PC-3 (cell line): ENCODE measurements at regions of chr5 and their contacts with region 1.

Region 1: DNA sequence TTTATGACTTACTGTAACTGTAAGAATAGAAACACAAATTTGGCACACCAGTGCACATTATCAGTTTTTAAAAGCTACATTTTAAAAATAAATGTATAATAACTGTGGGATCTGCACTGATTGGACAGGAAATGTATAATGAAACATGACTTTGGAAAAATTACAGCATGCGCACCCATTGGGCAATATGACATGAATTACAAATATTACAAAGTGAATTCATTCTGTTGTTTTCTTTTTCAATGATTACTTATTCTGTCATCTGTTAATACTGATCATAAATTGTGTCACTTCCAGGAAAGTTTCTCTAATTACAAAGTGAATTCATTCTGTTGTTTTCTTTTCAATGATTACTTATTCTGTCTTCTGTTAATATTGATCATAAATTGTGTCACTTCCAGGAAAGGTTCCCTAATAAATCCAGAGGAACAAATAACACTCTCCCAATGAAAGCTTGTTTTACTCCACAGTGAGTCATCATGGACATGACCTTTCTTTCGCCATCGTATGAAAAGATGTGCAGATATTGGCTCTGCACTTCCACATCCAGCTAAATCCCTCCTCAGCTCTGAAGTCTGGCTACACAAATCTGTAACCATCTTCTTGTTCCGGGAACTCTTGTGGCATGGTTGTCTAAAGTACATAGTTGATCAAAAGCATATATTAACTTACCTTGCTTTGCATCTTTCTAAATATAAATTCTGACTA is 297.0 kb upstream of the HAPLN1 start:
- DNase-seq: peak; percentile 76
- ATAC-seq: peak; percentile 76
- H3K4me3 ChIP-seq: no peak overlapping the region
- H3K27ac ChIP-seq: peak overlapping the region; percentile 95
- H3K4me1 ChIP-seq: peaks cover 42% of the 10 kb centered on the region
- H3K27me3 ChIP-seq: no peaks in the 10 kb centered on the region
- CTCF ChIP-seq: no peak

Region 2: GRCh38 chr5:83740741-83741140 is 276.9 kb before region 1 on chr5:
- CTCF ChIA-PET with region 1: no interaction called
- POLR2A ChIA-PET with region 1: no interaction called
- intact Hi-C with region 1: loop called (anchors 5 kb)
- DNase-seq: no peak
- ATAC-seq: no peak
- H3K4me3 ChIP-seq: no peak overlapping the region
- H3K27ac ChIP-seq: no peak overlapping the region
- H3K4me1 ChIP-seq: peaks cover 8% of the 10 kb centered on the region; the same call in 1 of the 2 replicates
- H3K27me3 ChIP-seq: no peaks in the 10 kb centered on the region
- CTCF ChIP-seq: no peak

Region 3: GRCh38 chr5:83955916-83956315 is 61.8 kb before region 1 on chr5:
- CTCF ChIA-PET with region 1: no interaction called
- POLR2A ChIA-PET with region 1: no interaction called
- intact Hi-C with region 1: loop called (anchors 2 kb)
- DNase-seq: peak; percentile 59
- ATAC-seq: peak; percentile 64
- H3K4me3 ChIP-seq: no peak overlapping the region
- H3K27ac ChIP-seq: peak overlapping the region; percentile 89
- H3K4me1 ChIP-seq: peaks cover 36% of the 10 kb centered on the region
- H3K27me3 ChIP-seq: no peaks in the 10 kb centered on the region
- CTCF ChIP-seq: no peak

Region 4: GRCh38 chr5:84088995-84089394 is 71.3 kb after region 1 on chr5:
- CTCF ChIA-PET with region 1: interaction called, 3 read pairs
- POLR2A ChIA-PET with region 1: no interaction called
- intact Hi-C with region 1: loop called (anchors 5 kb)
- DNase-seq: peak; percentile 63
- ATAC-seq: 0 out of 2 replicates have a peak, but pooled peaks have one; percentile 31
- H3K4me3 ChIP-seq: no peak overlapping the region
- H3K27ac ChIP-seq: no peak overlapping the region
- H3K4me1 ChIP-seq: peaks cover 21% of the 10 kb centered on the region
- H3K27me3 ChIP-seq: no peaks in the 10 kb centered on the region
- CTCF ChIP-seq: peak; percentile 72

Region 5: GRCh38 chr5:84249918-84250630 is 232.4 kb after region 1 on chr5:
- CTCF ChIA-PET with region 1: no interaction called
- POLR2A ChIA-PET with region 1: no interaction called
- intact Hi-C with region 1: loop called (anchors 5 kb)
- DNase-seq: peak; percentile 84
- ATAC-seq: peak; percentile 76
- H3K4me3 ChIP-seq: peak overlapping the region; percentile 47; the same call in 1 of the 2 replicates
- H3K27ac ChIP-seq: peak overlapping the region; percentile 58
- H3K4me1 ChIP-seq: peaks cover 54% of the 10 kb centered on the region
- H3K27me3 ChIP-seq: no peaks in the 10 kb centered on the region
- CTCF ChIP-seq: no peak

Region 6: DNA sequence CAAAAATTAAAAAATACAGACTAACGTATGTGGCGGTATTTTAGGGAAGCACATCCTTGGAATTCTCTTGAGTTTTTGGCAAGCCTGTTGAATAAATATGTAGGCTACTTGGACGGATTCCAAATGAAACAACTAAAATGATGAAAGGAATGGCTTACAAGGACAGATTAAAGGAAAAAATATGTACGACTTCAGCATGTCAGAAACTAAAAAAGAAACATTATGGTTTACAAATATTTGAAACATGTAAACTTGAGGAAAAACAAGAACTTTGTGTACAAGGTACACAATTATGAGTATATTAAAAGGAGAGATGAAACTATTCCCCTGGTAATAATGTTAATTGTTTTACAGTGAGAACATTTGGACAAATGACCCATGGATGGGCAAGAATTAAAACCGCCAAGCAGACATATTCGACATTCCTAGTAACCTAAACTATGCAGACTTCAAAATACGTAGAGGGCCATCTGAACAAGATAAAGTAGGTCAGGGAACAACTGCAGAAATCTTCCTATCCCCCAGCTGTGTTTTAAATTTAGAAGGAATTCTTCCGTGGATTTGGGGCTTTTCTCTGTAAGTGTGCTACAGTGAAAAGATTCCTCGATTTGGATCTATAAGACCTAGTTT is 354.5 kb after region 1 on chr5:
- CTCF ChIA-PET with region 1: no interaction called
- POLR2A ChIA-PET with region 1: no interaction called
- intact Hi-C with region 1: no loop called
- DNase-seq: no peak
- ATAC-seq: no peak
- H3K4me3 ChIP-seq: no peak overlapping the region
- H3K27ac ChIP-seq: no peak overlapping the region
- H3K4me1 ChIP-seq: no peaks in the 10 kb centered on the region
- H3K27me3 ChIP-seq: no peaks in the 10 kb centered on the region
- CTCF ChIP-seq: no peak